ENCODE measurements at regions of chr3 and their contacts with region 1.

Region 1: GRCh38 chr3:141553055-141553454 is 66.2 kb downstream of the RASA2 start:
- DNase-seq: no peak
- CTCF ChIP-seq: no peak

Region 2: GRCh38 chr3:141303481-141304223 is 249.4 kb before region 1 on chr3:
- in situ Hi-C with region 1: loop called (anchors 10 kb)
- DNase-seq: peak; percentile 76
- CTCF ChIP-seq: peak; percentile 57

Region 3: GRCh38 chr3:141413801-141414689 is 139.0 kb before region 1 on chr3:
- in situ Hi-C with region 1: no loop called
- DNase-seq: no peak
- CTCF ChIP-seq: no peak

Measured in GM13976 (cell line).